Gastrocnemius medialis (tissue), 4 donors: ENCODE measurements at regions of chr13 and their contacts with region 1.

Region 1: DNA sequence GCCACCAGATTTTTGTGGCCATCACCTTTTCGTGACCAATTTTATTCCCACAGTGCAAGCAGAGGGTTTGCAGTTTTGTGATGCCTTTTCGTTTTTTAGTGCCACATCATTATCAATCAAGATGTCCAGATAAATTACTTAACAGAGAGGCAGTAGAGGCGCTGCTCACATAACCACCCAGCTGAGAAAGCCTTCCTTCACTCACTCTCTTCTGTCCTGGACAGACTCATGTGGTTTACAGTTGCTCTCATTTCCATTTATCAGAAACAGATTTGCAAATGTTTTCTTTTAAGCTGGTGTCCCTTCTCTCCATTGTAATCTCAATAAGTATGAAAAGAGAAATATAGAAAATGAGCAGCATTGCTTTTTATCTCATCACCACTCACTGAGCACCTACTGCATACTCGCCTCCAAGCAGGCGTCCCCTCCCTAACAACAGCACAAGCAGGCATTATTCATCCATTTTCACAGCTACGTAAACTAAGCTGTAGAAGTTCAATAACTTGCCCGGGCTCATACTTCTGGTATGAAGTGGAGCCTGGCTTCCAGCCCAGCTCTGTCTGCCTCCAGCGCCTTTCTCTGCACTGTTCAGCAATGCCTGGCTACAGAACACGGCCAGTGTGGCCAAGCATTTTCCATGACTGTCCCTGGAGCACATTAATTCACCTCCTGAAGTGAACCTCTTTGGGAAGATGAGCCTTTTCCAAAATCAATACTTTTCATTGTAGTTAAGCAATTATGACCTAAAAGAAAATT is 34.6 kb upstream of the KATNAL1 start:
- DNase-seq: peak; percentile 51 to 76
- ATAC-seq: peak; percentile 66 to 76
- H3K4me3 ChIP-seq: no peak overlapping the region
- H3K27ac ChIP-seq: peak overlapping the region; percentile 11 to 63 (median 52)
- H3K4me1 ChIP-seq: peaks cover 31 to 32% of the 10 kb centered on the region in 2 donors
- H3K27me3 ChIP-seq: no peaks in the 10 kb centered on the region
- CTCF ChIP-seq: no peak
- POLR2A ChIP-seq: no peak

Region 2: DNA sequence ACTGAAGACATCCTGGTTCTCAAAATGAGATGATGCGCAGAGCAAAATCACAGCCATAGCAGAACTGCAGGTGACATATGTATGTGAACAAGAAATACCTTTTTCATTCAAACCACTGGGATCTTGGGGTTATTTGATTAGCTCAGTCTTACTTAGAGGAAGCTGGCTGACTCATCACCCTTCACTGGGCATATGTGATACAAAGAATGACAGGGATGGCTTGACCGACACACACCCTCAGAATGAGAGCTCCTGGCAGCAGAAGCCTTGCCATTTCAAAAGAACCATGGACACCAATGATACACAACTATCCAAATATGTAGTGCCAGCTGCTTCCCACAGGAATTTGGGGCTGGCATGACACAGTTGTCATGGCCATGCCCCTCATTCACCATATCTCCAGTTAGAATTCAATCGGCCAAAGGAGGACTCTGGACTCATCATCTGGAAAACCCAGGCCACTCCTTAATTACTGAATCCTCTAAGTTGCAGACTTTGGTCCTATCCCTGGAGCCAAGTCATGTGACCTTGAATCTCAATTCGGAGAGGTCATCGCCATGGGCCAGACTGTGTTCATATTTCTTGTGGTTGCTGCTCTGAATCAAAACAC is 150.4 kb before region 1 on chr13:
- in situ Hi-C with region 1: no loop called
- intact Hi-C with region 1: no loop called
- DNase-seq: no peak
- ATAC-seq: no peak
- H3K4me3 ChIP-seq: no peak overlapping the region
- H3K27ac ChIP-seq: no peak overlapping the region
- H3K4me1 ChIP-seq: no peaks in the 10 kb centered on the region
- H3K27me3 ChIP-seq: no peaks in the 10 kb centered on the region
- CTCF ChIP-seq: no peak
- POLR2A ChIP-seq: no peak

Region 3: GRCh38 chr13:30241532-30241931 is 100.5 kb before region 1 on chr13:
- in situ Hi-C with region 1: no loop called
- intact Hi-C with region 1: no loop called
- DNase-seq: peak in 1 of 2 donors; percentile 13
- ATAC-seq: no peak
- H3K4me3 ChIP-seq: no peak overlapping the region
- H3K27ac ChIP-seq: no peak overlapping the region
- H3K4me1 ChIP-seq: no peaks in the 10 kb centered on the region
- H3K27me3 ChIP-seq: no peaks in the 10 kb centered on the region
- CTCF ChIP-seq: no peak
- POLR2A ChIP-seq: no peak

Region 4: GRCh38 chr13:30306762-30307193 is 35.2 kb before region 1 on chr13:
- in situ Hi-C with region 1: no loop called
- intact Hi-C with region 1: loop called (anchors 2 kb)
- DNase-seq: peak; percentile 86 to 88
- ATAC-seq: peak; percentile 98 to 99
- H3K4me3 ChIP-seq: peak overlapping the region; percentile 85 to 98 (median 91)
- H3K27ac ChIP-seq: peak overlapping the region; percentile 87 to 96 (median 90)
- H3K4me1 ChIP-seq: peaks cover 15 to 16% of the 10 kb centered on the region in 2 donors
- H3K27me3 ChIP-seq: no peaks in the 10 kb centered on the region
- CTCF ChIP-seq: no peak
- POLR2A ChIP-seq: no peak